ENCODE measurements at regions of chr3 and their contacts with region 1.

Region 1: DNA sequence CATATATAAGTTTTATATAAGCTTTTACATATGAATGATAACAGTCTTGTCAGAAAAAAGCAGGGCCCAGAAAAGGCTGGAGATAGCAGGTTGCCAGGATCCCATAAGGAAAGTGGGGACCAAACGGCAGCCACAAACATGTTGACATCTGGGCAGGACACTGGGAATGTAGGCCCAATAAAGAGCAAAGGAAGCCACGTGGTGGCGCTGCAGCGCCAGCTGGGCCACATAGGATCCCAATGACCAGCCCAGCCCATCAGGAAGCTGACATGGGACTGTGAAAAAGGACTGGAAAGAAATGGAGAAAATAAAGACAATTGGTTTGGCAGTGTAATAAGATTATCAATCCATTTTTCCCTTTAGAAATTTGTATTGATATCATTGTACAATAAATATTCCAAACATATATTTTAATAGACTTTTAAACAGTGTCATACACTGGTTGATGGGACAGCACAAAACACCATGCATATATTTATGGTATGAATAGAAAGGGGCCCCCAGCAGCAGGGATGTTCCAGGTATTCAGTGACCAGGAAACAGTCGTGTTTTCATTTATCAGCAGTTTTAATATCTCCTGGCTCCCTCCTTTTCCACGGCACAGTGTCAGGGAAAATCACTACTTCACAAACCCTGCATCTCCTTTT is 89.0 kb upstream of the STRIT1 start:
- DNase-seq: peak; percentile 38

Region 2: DNA sequence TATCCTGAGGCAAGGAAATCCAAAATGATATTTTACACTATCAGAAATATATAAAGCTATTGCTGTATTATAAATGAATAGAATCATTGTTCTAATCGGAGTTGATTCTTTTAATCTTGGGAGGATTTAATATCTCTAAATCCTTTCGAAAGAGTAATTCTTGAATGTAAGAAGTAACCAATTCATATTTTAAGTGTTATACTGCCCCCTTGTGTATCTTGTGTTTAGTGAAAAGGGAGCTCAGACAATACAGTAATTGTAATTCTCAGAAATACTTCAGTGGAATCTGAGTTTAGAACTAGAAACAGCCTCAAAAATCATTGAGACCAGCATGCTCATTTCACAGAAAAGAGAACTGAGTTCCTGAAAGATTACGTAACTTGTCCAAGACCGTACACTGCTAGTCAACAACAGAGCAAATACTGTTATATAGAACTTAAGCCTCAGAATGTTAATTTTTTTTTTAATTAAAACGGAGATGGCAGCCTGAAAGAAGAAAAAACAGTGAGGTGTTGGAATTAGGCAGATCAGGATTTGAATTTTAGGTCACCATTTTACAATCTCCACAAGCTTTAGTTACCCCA is 319.5 kb after region 1 on chr3:
- in situ Hi-C with region 1: loop called (anchors 25 kb)
- DNase-seq: peak; percentile 67